ENCODE measurements at regions of chr13 and their contacts with region 1.

Region 1: GRCh38 chr13:50123862-50124536 is 108.8 kb downstream of the KCNRG start:
- DNase-seq: peak; percentile 44 to 93 (median 64)
- ATAC-seq: peak; percentile 64
- H3K4me3 ChIP-seq: peak overlapping the region; percentile 90
- H3K4me3 Mint-ChIP-seq: peak overlapping the region; percentile 93
- H3K27ac ChIP-seq: peak overlapping the region; percentile 88 to 98
- H3K27ac Mint-ChIP-seq: peak overlapping the region; percentile 94
- H3K4me1 ChIP-seq: peaks cover 44% of the 10 kb centered on the region
- H3K4me1 Mint-ChIP-seq: peaks cover 58% of the 10 kb centered on the region
- H3K27me3 ChIP-seq: peaks cover 13 to 14% of the 10 kb centered on the region in 2 experiments
- H3K27me3 Mint-ChIP-seq: peaks cover 23% of the 10 kb centered on the region
- CTCF ChIP-seq: no peak

Region 2: GRCh38 chr13:49443704-49444523 is 680.1 kb before region 1 on chr13 and contains the starts of genes CAB39L and SETDB2:
- CTCF ChIA-PET with region 1: no interaction called
- POLR2A ChIA-PET with region 1: interaction called, 6 read pairs
- intact Hi-C with region 1: loop called in 1 of 2 experiments (anchors 10 kb)
- DNase-seq: peak; percentile 97 to 100 (median 98)
- ATAC-seq: peak; percentile 88
- H3K4me3 ChIP-seq: peak within 1 kb of the TSS; percentile 76
- H3K4me3 Mint-ChIP-seq: peak within 1 kb of the TSS; percentile 97
- H3K27ac ChIP-seq: peak within 1 kb of the TSS; percentile 85
- H3K27ac Mint-ChIP-seq: peak within 1 kb of the TSS; percentile 96
- H3K4me1 ChIP-seq: peaks cover 18% of the 10 kb centered on the region
- H3K4me1 Mint-ChIP-seq: peaks cover 48% of the 10 kb centered on the region
- H3K27me3 ChIP-seq: no peaks in the 10 kb centered on the region
- H3K27me3 Mint-ChIP-seq: no peaks in the 10 kb centered on the region
- CTCF ChIP-seq: peak; percentile 41
- total RNA-seq, gene CAB39L: 1.9 to 2.5 TPM
- total RNA-seq, gene SETDB2: 10.8 to 11.5 TPM

Region 3: GRCh38 chr13:49936085-49936940 is 187.7 kb before region 1 on chr13 and contains the start of gene SPRYD7:
- CTCF ChIA-PET with region 1: no interaction called
- POLR2A ChIA-PET with region 1: interaction called, 29 read pairs
- intact Hi-C with region 1: loop called in 1 of 2 experiments (anchors 5 kb)
- DNase-seq: peak; percentile 86 to 97 (median 92)
- ATAC-seq: peak; percentile 82
- H3K4me3 ChIP-seq: peak within 1 kb of the TSS; percentile 91
- H3K4me3 Mint-ChIP-seq: peak within 1 kb of the TSS; percentile 98
- H3K27ac ChIP-seq: no peak within 1 kb of the TSS
- H3K27ac Mint-ChIP-seq: peak within 1 kb of the TSS; percentile 83
- H3K4me1 ChIP-seq: peaks cover 18% of the 10 kb centered on the region
- H3K4me1 Mint-ChIP-seq: peaks cover 19% of the 10 kb centered on the region
- H3K27me3 ChIP-seq: no peaks in the 10 kb centered on the region
- H3K27me3 Mint-ChIP-seq: no peaks in the 10 kb centered on the region
- CTCF ChIP-seq: peak; percentile 74
- total RNA-seq, gene SPRYD7: 1.1 to 1.5 TPM

Region 4: DNA sequence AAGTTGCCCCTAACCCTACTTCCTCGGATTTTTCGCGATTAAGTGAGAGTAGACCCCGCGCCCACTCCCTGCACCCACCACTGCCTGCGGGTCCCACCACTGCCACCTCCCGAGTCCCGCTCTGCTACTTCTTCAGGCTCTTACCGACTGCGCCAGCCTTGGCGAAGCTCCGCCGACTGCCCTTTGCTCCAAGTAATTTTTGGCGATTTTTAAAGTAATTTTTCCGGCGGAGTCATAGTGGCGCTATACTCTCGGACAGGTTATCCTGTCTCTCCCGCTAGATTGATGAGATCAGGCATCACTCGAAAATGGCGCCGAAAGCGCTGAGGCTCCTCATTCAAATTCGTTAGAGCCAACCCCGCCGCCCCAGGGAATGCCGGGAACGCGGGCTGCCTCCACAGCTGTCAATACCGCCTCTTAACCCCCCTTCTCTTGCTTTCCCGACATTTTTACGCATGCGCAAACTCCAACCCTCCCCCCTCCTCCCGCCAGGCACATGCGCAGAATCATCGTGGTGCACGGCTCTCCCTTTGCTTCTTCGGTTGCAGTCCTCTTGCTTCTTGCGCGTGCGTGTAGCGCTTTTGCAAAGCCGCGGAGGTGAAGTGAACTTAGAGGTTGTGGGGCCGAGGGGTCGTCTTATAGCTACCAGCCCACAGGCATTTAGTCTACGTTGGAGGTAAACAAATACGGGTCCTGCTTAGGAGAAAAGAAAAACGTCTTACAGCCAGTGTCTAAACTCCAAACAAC is 42.1 kb before region 1 on chr13:
- CTCF ChIA-PET with region 1: interaction called, 19 read pairs
- POLR2A ChIA-PET with region 1: interaction called, 498 read pairs
- intact Hi-C with region 1: loop called (anchors 1 kb)
- DNase-seq: peak; percentile 97 to 99 (median 98)
- ATAC-seq: peak; percentile 70
- H3K4me3 ChIP-seq: peak overlapping the region; percentile 78
- H3K4me3 Mint-ChIP-seq: peak overlapping the region; percentile 98
- H3K27ac ChIP-seq: peak overlapping the region; percentile 47 to 77
- H3K27ac Mint-ChIP-seq: peak overlapping the region; percentile 91
- H3K4me1 ChIP-seq: peaks cover 27% of the 10 kb centered on the region
- H3K4me1 Mint-ChIP-seq: peaks cover 58% of the 10 kb centered on the region
- H3K27me3 ChIP-seq: no peaks in the 10 kb centered on the region
- H3K27me3 Mint-ChIP-seq: peaks cover 24% of the 10 kb centered on the region
- CTCF ChIP-seq: no peak

Region 5: DNA sequence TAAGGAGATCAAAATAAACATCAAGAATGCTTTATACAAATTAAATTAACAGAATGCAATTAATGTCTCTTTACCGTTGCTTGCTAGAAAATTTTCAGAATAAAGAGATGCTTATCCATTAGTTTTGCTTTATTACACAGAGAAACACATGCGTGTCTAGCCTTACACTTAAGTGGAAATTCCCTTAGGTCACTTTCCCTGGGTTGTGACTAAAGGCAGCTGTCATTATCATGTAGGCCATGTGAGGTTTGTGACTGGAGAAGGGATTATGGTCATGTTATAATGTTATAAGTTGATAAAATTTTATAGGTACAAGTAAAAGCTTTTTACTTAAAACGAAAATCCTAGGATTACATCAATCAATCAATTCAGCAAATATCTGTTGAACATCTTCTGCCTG is 12.2 kb after region 1 on chr13:
- CTCF ChIA-PET with region 1: no interaction called
- POLR2A ChIA-PET with region 1: interaction called, 18 read pairs
- intact Hi-C with region 1: no loop called
- DNase-seq: no peak
- ATAC-seq: no peak
- H3K4me3 ChIP-seq: no peak overlapping the region
- H3K4me3 Mint-ChIP-seq: no peak overlapping the region
- H3K27ac ChIP-seq: no peak overlapping the region
- H3K27ac Mint-ChIP-seq: no peak overlapping the region
- H3K4me1 ChIP-seq: peaks cover 16% of the 10 kb centered on the region
- H3K4me1 Mint-ChIP-seq: peaks cover 15% of the 10 kb centered on the region
- H3K27me3 ChIP-seq: peaks cover 27 to 29% of the 10 kb centered on the region in 2 experiments
- H3K27me3 Mint-ChIP-seq: peaks cover 43% of the 10 kb centered on the region
- CTCF ChIP-seq: no peak

Region 6: DNA sequence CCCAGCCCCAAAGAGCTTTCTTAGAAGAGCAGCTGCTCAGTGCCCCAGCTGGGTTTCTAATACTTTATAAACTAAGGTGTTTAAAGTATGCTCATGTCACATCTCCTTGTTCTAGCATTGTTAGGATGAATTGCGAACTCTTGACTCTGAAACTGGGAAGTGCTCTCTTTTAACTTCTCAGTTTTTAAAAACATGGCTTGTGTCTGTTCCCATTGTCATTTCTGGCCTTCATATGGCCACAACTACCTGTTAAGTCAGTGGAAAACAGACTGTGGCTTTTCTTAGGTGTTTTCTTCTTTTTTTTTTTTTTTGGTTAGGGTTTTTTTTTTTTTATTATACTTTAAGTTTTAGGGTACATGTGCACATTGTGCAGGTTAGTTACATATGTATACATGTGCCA is 56.0 kb after region 1 on chr13:
- CTCF ChIA-PET with region 1: no interaction called
- POLR2A ChIA-PET with region 1: no interaction called
- intact Hi-C with region 1: no loop called
- DNase-seq: no peak
- ATAC-seq: no peak
- H3K4me3 ChIP-seq: no peak overlapping the region
- H3K4me3 Mint-ChIP-seq: no peak overlapping the region
- H3K27ac ChIP-seq: no peak overlapping the region
- H3K27ac Mint-ChIP-seq: no peak overlapping the region
- H3K4me1 ChIP-seq: no peaks in the 10 kb centered on the region
- H3K4me1 Mint-ChIP-seq: no peaks in the 10 kb centered on the region
- H3K27me3 ChIP-seq: no peaks in the 10 kb centered on the region
- H3K27me3 Mint-ChIP-seq: no peaks in the 10 kb centered on the region
- CTCF ChIP-seq: no peak

Region 7: DNA sequence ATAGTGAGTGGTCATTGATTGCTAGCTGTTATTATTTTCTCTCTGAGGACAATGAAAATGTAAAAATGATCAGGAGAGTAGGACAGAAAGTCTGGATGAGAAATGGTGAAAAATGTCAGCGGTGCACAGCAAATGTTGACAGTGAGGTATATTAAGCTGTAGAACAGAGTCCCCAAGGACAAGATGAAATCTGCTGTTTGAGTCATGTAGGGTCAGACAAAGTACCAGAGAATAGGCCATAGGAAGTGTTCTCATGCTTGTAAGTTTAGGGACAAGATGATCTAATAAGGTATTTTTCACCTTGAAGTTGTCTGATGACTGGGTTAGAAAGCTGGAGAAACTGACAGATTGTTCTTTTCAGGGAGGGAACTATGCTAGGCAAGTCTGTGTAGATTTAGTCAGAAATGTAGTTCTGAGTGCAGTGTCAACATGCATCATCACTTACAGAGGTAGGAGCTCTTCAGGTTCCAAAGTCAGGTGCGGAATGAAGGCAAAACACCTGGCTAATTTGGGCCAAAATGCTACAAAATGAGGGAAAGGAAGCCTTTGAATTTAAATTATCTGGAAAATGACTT is 350.2 kb after region 1 on chr13:
- CTCF ChIA-PET with region 1: no interaction called
- POLR2A ChIA-PET with region 1: no interaction called
- intact Hi-C with region 1: no loop called
- DNase-seq: no peak
- ATAC-seq: no peak
- H3K4me3 ChIP-seq: no peak overlapping the region
- H3K4me3 Mint-ChIP-seq: no peak overlapping the region
- H3K27ac ChIP-seq: no peak overlapping the region
- H3K27ac Mint-ChIP-seq: no peak overlapping the region
- H3K4me1 ChIP-seq: no peaks in the 10 kb centered on the region
- H3K4me1 Mint-ChIP-seq: no peaks in the 10 kb centered on the region
- H3K27me3 ChIP-seq: no peaks in the 10 kb centered on the region
- H3K27me3 Mint-ChIP-seq: peaks cover 4% of the 10 kb centered on the region
- CTCF ChIP-seq: no peak

Region 8: DNA sequence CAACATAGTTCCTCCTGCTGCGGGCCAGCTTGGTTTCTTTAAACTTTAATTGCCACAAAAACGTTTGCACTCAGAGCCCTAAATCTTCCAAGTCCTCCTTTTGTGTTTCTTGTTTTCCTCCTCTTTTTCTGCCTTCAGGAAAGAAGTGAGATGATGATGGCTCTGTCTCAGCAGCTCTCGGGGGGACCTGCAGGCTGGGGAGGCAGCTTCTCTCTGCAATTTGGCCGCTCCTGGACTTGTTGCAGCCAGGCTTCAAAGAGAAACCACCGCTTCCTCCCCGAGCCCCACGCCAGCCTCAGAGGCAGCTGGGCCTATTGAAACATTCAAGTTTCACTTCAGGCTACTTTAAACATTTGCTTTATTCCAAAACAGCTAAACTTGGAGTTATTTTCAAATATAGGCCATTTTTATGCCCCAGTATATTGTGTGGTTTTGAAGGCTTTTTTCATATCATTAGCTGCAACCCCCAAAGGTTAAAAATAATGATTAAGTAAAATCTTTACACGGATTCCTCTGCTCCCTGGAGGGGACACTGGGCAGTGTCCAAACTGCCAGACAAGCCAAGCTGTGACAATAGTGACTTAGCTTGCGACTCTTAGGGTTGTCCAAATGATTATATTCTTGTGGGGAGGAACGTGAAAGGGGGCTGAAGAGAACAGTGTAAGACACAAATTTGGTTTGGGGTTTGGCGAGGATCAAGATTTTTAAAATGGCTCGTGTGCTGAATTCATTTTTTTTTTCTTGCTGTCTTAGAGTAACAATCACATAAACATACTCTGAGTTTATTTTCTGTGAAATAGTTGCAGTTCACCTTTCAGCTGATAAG is 388.7 kb after region 1 on chr13:
- CTCF ChIA-PET with region 1: no interaction called
- POLR2A ChIA-PET with region 1: interaction called, 10 read pairs
- intact Hi-C with region 1: no loop called
- DNase-seq: peak in 13 of 14 experiments; percentile 10 to 74 (median 33)
- ATAC-seq: peak; percentile 63
- H3K4me3 ChIP-seq: peak overlapping the region; percentile 52
- H3K4me3 Mint-ChIP-seq: no peak overlapping the region
- H3K27ac ChIP-seq: peak overlapping the region in 1 of 2 donors; percentile 61
- H3K27ac Mint-ChIP-seq: no peak overlapping the region
- H3K4me1 ChIP-seq: peaks cover 23% of the 10 kb centered on the region
- H3K4me1 Mint-ChIP-seq: no peaks in the 10 kb centered on the region
- H3K27me3 ChIP-seq: no peaks in the 10 kb centered on the region
- H3K27me3 Mint-ChIP-seq: no peaks in the 10 kb centered on the region
- CTCF ChIP-seq: no peak

Region 9: DNA sequence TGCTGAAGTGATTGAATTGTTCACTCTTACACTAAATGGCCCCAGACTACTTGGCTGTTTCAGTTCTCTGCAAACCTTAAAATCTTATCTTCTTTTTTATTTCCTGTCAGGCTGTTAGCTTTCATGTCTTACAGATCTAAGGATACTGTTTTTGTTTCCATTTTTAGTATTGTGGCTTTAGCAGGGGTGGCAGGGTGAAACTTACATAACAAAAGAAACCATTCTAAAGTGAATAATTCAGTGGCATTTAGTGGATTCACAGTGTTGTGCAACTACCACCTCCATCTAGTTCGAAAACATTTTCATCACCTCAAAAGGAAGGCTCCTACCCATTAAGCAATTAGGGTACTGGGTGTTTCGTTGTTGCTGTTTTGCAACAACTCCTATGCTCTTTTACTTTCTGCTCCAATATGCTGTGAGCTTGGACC is 1701.2 kb after region 1 on chr13:
- CTCF ChIA-PET with region 1: no interaction called
- POLR2A ChIA-PET with region 1: no interaction called
- intact Hi-C with region 1: loop called in 1 of 2 experiments (anchors 10 kb)
- DNase-seq: peak in 4 of 14 experiments; percentile 39 to 85 (median 76)
- ATAC-seq: peak; percentile 58
- H3K4me3 ChIP-seq: peak overlapping the region; percentile 54
- H3K4me3 Mint-ChIP-seq: peak overlapping the region; percentile 86
- H3K27ac ChIP-seq: peak overlapping the region; percentile 76 to 79
- H3K27ac Mint-ChIP-seq: peak overlapping the region; percentile 89
- H3K4me1 ChIP-seq: peaks cover 78% of the 10 kb centered on the region
- H3K4me1 Mint-ChIP-seq: peaks cover 88% of the 10 kb centered on the region
- H3K27me3 ChIP-seq: no peaks in the 10 kb centered on the region
- H3K27me3 Mint-ChIP-seq: no peaks in the 10 kb centered on the region
- CTCF ChIP-seq: no peak